Ascending aorta (tissue), 2 donors: ENCODE measurements at regions of chr5 and their contacts with region 1.

Region 1: GRCh38 chr5:141923448-141924352 is at the start of gene DELE1:
- DNase-seq: peak; percentile 84 to 98
- H3K4me3 ChIP-seq: peak within 1 kb of the TSS; percentile 70 to 79
- H3K27ac ChIP-seq: peak within 1 kb of the TSS; percentile 96 to 97
- H3K4me1 ChIP-seq: peaks cover 8 to 13% of the 10 kb centered on the region in 2 donors
- H3K27me3 ChIP-seq: no peaks in the 10 kb centered on the region
- CTCF ChIP-seq: no peak
- total RNA-seq, gene DELE1: 40.7 TPM

Region 2: DNA sequence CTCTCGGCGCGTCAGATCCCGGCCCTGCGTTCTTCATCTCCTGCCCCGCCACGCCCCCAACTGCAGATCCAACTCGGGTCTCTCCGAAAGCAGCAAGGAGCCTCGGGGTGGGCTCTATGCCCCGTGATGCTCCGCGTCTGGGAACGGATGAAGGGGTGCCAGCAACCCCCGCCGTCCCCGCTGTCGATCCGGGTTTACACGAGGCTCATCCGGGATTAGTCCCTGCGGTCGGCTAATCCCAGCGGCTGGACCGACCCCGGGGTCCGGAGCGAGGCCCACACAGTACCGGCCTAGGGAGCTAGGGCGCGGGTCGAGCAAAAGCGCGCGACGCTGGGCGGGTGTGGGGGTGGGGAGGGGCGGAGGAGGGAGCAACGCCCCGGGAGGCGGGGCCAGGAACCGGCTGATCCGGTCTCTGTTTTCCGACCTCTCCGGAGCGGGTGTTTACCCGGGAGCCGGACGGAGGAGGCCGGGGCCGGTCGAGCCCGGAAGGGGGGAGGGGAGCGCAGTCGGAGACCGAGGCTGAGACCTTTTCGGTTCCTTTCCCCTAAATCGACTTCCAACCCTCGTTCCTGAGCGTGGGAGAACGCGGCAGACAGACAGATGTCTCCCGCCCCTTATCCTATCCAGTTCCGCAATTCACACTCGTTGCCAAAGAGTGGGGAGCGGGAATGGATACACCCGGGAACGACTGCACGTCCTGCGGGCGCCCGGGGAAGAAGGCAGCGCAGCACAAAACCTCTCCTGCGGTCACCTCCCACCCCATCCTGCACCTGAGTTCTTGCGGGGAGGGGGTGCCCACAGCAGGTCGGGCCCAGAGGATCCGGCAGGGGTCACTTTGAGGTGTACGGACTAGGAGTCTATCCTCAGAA is 74.1 kb before region 1 on chr5:
- intact Hi-C with region 1: loop called (anchors 1 kb)
- DNase-seq: peak; percentile 30 to 88
- H3K4me3 ChIP-seq: peak overlapping the region; percentile 74 to 89
- H3K27ac ChIP-seq: peak overlapping the region; percentile 85 to 88
- H3K4me1 ChIP-seq: peaks cover 0 to 8% of the 10 kb centered on the region in 2 donors
- H3K27me3 ChIP-seq: no peaks in the 10 kb centered on the region
- CTCF ChIP-seq: no peak

Region 3: GRCh38 chr5:141940695-141941271 is 17.1 kb after region 1 on chr5:
- intact Hi-C with region 1: loop called (anchors 2 kb)
- DNase-seq: peak in 1 of 2 donors; percentile 76
- H3K4me3 ChIP-seq: no peak overlapping the region
- H3K27ac ChIP-seq: peak overlapping the region; percentile 70 to 85
- H3K4me1 ChIP-seq: peaks cover 11 to 25% of the 10 kb centered on the region in 2 donors
- H3K27me3 ChIP-seq: no peaks in the 10 kb centered on the region
- CTCF ChIP-seq: peak in 2 of 3 experiments; percentile 20 to 23

Region 4: GRCh38 chr5:141954194-141954593 is 30.5 kb after region 1 on chr5:
- intact Hi-C with region 1: no loop called
- DNase-seq: no peak
- H3K4me3 ChIP-seq: no peak overlapping the region
- H3K27ac ChIP-seq: no peak overlapping the region
- H3K4me1 ChIP-seq: no peaks in the 10 kb centered on the region
- H3K27me3 ChIP-seq: no peaks in the 10 kb centered on the region
- CTCF ChIP-seq: no peak

Region 5: GRCh38 chr5:141968914-141969608 is 45.4 kb after region 1 on chr5 and contains the start of gene RNF14:
- intact Hi-C with region 1: loop called (anchors 2 kb)
- DNase-seq: peak; percentile 71 to 97
- H3K4me3 ChIP-seq: peak within 1 kb of the TSS; percentile 67 to 83
- H3K27ac ChIP-seq: peak within 1 kb of the TSS; percentile 95 to 98
- H3K4me1 ChIP-seq: peaks cover 0 to 12% of the 10 kb centered on the region in 2 donors
- H3K27me3 ChIP-seq: no peaks in the 10 kb centered on the region
- CTCF ChIP-seq: peak; percentile 98 to 99 (median 98)
- total RNA-seq, gene RNF14: 8.8 TPM